Activated CD4-positive, alpha-beta T cell treated with anti-CD3 and anti-CD28 coated beads for 36 hours (primary cell): ENCODE measurements at regions of chr4 and their contacts with region 1.

Region 1: DNA sequence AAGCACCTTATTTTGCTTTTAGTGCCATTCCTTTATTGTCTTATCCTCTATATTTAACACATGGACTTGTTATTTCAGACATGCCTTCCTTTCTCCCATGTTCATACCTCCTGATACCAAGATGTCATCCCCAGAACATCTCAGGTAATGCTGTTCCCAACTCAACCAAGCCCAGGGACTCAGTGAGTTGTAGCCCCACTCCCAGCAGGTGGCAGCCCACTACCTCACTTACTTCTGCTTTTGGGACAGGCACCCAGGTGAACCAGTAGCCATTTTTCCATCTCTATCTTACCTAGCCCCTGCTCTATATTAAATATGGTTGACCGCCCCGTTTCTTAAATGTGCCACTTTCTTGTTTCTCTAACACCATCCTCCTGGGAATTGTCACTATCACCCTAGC is 199.0 kb downstream of the DCHS2 start:
- DNase-seq: peak; percentile 27
- ATAC-seq: no peak
- H3K4me3 Mint-ChIP-seq: no peak overlapping the region
- H3K27ac Mint-ChIP-seq: no peak overlapping the region
- H3K4me1 Mint-ChIP-seq: no peaks in the 10 kb centered on the region
- H3K27me3 Mint-ChIP-seq: peaks cover 8% of the 10 kb centered on the region

Region 2: GRCh38 chr4:154349829-154350228 is 57.2 kb after region 1 on chr4:
- CTCF ChIA-PET with region 1: no interaction called
- POLR2A ChIA-PET with region 1: no interaction called
- intact Hi-C with region 1: loop called in 1 of 2 experiments (anchors 2 kb)
- DNase-seq: no peak
- ATAC-seq: no peak
- H3K4me3 Mint-ChIP-seq: no peak overlapping the region
- H3K27ac Mint-ChIP-seq: no peak overlapping the region
- H3K4me1 Mint-ChIP-seq: no peaks in the 10 kb centered on the region
- H3K27me3 Mint-ChIP-seq: no peaks in the 10 kb centered on the region

Region 3: GRCh38 chr4:154416190-154416547 is 123.6 kb after region 1 on chr4:
- CTCF ChIA-PET with region 1: no interaction called
- POLR2A ChIA-PET with region 1: no interaction called
- intact Hi-C with region 1: no loop called
- DNase-seq: peak; percentile 10
- ATAC-seq: no peak
- H3K4me3 Mint-ChIP-seq: peak overlapping the region; percentile 62
- H3K27ac Mint-ChIP-seq: no peak overlapping the region
- H3K4me1 Mint-ChIP-seq: peaks cover 14% of the 10 kb centered on the region
- H3K27me3 Mint-ChIP-seq: peaks cover 34% of the 10 kb centered on the region